ENCODE measurements at regions of chr1 and their contacts with region 1.

Region 1: DNA sequence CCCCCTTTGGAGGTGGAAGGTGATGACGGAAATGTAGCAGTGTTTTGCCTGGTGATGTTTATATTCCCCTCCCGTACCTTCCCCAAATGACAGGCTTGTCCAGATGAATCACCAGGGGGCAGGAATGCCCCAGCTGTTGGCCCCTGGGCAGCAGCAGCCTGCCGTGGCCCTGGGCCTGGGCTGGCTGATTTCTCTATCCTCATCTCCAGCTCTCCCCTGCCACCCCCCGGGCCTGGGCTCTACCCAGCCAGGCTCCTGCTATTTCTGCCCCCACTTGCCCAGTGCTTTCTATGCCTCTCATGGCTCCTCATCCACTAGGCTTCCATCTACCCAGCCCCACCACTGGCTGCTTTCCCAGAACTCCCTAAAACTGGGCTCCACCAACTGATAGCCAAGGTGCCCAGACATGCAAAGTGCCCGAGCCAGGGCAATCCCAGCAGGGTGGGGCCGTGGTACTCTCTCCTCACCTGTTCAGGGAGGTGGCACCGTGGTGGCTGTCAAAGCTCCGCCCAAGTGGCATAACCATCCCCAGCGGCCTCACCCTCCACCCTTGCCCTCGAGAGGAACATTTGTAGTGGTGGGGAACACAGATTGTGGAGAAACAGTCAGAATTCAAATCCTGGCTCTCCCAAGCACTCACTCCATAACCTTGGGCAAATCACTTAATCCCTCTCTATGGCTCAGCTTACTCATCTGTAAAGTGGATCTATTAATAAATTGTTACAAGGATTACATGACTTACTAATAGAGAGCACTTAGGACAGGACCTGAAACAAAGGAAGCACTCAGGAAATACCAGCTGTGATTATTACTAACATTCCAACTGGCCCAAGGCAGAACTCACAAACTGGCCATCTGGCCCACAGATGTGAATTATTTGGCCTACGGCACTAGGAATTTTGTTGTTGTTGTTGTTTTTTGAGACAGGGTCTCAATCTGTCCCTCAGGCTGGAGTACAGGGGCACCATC is 12.8 kb upstream of the ECE1 start:
- DNase-seq: peak; percentile 78
- H3K4me3 ChIP-seq: no peak overlapping the region
- H3K27ac ChIP-seq: peak overlapping the region; percentile 90
- H3K4me1 ChIP-seq: peaks cover 46% of the 10 kb centered on the region
- H3K27me3 ChIP-seq: no peaks in the 10 kb centered on the region
- CTCF ChIP-seq: peak; percentile 4 to 19
- POLR2A ChIP-seq: peak; percentile 26

Region 2: GRCh38 chr1:21280011-21280471 is 23.0 kb before region 1 on chr1:
- CTCF ChIA-PET with region 1: interaction called, 5 read pairs
- POLR2A ChIA-PET with region 1: interaction called, 7 read pairs
- dilution Hi-C with region 1: no loop called
- intact Hi-C with region 1: loop called (anchors 1 kb)
- DNase-seq: peak; percentile 92
- H3K4me3 ChIP-seq: peak overlapping the region in 1 of 3 experiments; percentile 68
- H3K27ac ChIP-seq: peak overlapping the region; percentile 98
- H3K4me1 ChIP-seq: peaks cover 64% of the 10 kb centered on the region
- H3K27me3 ChIP-seq: no peaks in the 10 kb centered on the region
- CTCF ChIP-seq: no peak
- POLR2A ChIP-seq: peak; percentile 40

Region 3: GRCh38 chr1:21313203-21313885 is 10.3 kb after region 1 on chr1:
- CTCF ChIA-PET with region 1: interaction called, 4 read pairs
- POLR2A ChIA-PET with region 1: interaction called, 11 read pairs
- dilution Hi-C with region 1: no loop called
- intact Hi-C with region 1: loop called (anchors 1 kb)
- DNase-seq: peak; percentile 56
- H3K4me3 ChIP-seq: no peak overlapping the region
- H3K27ac ChIP-seq: no peak overlapping the region
- H3K4me1 ChIP-seq: peaks cover 28% of the 10 kb centered on the region
- H3K27me3 ChIP-seq: no peaks in the 10 kb centered on the region
- CTCF ChIP-seq: no peak
- POLR2A ChIP-seq: no peak

Region 4: DNA sequence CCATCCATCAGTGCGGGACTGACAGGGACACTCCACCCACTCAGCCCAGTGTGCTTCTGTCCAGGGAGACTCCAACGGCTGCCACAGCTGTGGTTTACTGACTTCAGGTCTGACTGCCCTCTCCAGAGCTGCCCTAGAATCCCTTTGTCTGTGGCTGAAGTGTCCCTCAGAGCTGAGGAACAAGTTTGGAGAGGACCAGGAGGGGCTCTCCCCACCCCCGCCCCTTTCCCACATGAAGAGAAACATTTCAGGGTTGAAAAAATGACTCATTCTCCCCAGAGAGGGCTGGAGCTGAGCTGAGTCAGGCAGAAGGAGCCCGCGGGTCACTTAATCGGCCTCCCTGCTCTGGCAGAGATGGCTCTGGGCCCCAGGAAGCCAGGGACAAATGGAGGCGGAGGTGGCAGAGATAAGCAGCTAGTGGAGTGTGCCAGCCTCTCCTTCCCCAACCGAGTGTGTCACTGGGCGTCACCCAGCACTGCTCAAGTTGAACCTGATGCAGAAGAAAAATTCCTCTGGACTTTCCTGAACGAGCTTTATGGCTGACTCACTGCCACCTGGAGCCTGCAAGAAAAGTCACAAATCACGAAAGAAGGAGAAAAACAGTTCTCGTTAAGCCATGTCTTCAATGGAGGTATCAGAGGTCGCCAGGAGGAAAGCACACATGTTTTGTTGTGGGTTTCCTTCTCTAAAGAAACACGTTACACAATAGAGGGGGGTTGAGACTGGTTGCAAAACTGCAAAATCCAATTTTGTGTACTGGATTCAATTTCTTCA is 21.5 kb after region 1 on chr1:
- CTCF ChIA-PET with region 1: interaction called, 28 read pairs
- POLR2A ChIA-PET with region 1: interaction called, 8 read pairs
- dilution Hi-C with region 1: no loop called
- intact Hi-C with region 1: loop called (anchors 1 kb)
- DNase-seq: peak; percentile 93
- H3K4me3 ChIP-seq: no peak overlapping the region
- H3K27ac ChIP-seq: peak overlapping the region; percentile 96
- H3K4me1 ChIP-seq: peaks cover 62% of the 10 kb centered on the region
- H3K27me3 ChIP-seq: no peaks in the 10 kb centered on the region
- CTCF ChIP-seq: no peak
- POLR2A ChIP-seq: peak; percentile 39

Region 5: DNA sequence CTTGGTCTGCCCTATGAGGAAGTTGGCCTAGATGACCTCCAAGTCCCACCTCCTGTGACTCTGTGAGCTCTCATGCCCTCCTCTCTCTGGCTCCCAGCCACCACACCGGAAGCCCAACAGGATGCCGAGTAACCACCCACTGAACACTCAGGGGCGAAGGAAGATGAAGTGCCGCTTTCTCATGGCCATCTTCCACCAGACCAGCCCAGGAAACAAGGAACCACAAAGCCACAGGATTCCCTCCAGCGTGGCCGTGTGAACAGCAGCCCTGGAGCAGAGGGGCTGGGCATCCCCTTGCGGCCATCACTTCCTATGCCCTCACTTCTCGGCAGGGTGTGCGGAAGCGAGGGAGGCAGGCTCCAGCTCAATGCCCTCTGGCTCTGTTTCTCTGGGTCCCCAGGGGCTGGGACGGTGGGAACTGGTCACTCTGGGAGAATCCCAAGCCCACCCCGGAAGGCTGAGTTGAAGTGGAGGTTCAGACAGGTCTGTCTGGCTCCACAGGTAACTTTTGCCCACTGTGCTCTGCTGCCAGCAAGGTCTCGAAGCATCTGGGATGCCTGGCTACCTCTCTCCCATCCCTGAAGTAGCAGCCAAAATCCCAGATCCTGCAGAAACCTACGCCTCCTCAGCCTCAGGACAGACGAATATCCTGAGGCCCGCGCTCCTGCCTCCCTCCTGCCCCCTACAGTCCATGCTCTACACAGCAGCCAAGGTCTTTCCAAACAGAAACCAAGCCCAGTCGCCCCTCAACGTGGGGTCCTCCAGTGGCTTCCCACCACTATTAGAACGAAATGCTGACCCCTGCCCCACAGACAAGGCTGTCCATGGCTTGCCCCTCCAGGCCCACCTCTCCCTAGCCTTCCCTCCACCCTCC is 31.4 kb after region 1 on chr1:
- CTCF ChIA-PET with region 1: interaction called, 9 read pairs
- POLR2A ChIA-PET with region 1: no interaction called
- dilution Hi-C with region 1: no loop called
- intact Hi-C with region 1: loop called (anchors 1 kb)
- DNase-seq: peak; percentile 75
- H3K4me3 ChIP-seq: peak overlapping the region in 1 of 3 experiments; percentile 10
- H3K27ac ChIP-seq: peak overlapping the region; percentile 81
- H3K4me1 ChIP-seq: peaks cover 73% of the 10 kb centered on the region
- H3K27me3 ChIP-seq: no peaks in the 10 kb centered on the region
- CTCF ChIP-seq: peak; percentile 82 to 89
- POLR2A ChIP-seq: peak; percentile 43